ENCODE measurements at regions of chr2 and their contacts with region 1.

Region 1: DNA sequence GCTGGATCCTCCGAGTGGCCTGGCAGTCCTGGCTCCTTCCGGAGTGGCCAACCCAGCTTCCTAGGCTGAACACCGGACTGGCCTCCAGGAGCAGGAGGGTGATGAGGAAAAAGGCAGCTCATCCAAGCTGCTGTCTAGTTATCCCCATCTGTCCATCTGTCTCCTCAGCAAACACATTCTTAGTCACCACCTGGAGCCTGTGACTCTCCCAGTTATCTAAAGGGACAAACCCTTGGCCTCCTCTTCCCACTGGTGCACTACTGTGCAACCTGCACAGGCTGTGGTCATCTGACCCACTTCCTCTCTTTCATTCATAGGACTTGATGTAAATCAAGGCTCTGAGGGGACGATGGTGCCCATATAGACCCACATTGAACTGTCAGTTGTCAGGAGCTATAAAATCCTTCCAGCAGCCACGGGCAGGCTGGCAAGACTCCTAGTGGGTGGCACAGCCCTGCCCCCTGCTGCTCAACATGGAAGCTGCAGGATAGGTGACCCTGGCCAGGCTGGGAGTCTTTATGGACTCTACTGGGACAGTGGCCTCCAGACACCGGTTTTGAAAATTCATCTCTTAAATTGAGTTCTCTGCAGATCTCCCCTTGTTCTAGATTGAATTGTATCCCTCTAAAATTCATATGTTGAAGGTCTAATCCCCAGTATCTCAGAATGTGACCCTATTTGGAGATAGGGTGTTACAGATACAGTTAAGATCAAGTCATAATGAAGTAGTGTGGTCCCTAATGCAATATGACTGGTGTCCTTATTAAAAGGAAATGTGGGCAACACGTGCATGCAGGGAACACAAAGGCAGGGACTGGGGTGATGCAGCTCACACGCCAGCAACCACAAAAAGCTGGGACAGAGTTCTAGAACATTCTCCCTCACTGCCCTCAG is 29.3 kb upstream of the DUSP2 start:
- DNase-seq: peak; percentile 73
- H3K4me3 Mint-ChIP-seq: peak overlapping the region; percentile 59
- H3K27ac Mint-ChIP-seq: peak overlapping the region; percentile 69
- H3K4me1 Mint-ChIP-seq: peaks cover 15% of the 10 kb centered on the region
- H3K27me3 Mint-ChIP-seq: no peaks in the 10 kb centered on the region

Region 2: DNA sequence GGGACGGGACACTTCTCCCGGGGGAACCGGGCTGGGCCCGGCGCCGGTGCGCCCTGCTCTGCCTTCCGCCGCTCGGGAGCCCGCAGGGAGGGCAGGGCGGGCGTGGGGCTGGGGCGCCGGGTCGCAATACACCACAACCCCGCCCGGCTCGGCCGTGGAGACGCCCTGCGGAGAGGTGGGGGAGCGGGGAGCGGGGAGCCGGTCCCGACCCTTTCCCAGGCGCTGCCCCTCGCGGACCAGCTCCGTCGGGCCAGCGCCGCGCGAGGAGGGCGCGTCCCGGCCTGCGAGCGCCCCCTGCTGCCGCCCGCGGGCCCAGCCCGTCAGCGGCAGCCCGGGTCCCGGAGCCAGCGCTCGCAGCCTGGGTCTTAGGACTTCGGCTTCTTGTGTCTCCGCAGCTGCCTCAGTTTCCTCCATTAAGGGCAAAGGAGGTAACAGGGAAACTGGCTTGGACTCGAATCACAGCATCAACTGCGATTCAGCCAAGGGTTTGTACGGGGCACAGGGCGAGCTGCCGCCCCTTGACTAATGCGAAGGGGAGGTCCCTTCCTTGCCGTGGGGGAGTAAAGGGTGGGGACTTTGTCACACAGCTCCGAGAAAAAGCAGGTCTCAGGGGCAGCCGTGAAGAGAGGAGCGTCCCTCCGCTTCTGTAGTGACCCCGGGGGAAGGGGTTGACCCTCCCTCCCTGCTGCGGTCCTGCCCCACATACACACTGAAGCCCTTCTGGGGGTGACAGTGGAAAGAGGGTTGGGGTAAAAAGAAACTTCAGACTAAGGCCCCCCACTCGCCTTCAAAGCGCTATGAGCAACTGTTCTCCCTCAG is 57.4 kb before region 1 on chr2:
- intact Hi-C with region 1: loop called (anchors 1 kb)
- DNase-seq: peak; percentile 61
- H3K4me3 Mint-ChIP-seq: peak overlapping the region; percentile 75
- H3K27ac Mint-ChIP-seq: no peak overlapping the region
- H3K4me1 Mint-ChIP-seq: peaks cover 28% of the 10 kb centered on the region
- H3K27me3 Mint-ChIP-seq: peaks cover 37% of the 10 kb centered on the region

Region 3: GRCh38 chr2:96138179-96139145 is 36.0 kb before region 1 on chr2 and contains the start of gene ASTL:
- intact Hi-C with region 1: loop called (anchors 1 kb)
- DNase-seq: peak; percentile 53
- H3K4me3 Mint-ChIP-seq: no peak within 1 kb of the TSS
- H3K27ac Mint-ChIP-seq: no peak within 1 kb of the TSS
- H3K4me1 Mint-ChIP-seq: peaks cover 17% of the 10 kb centered on the region
- H3K27me3 Mint-ChIP-seq: peaks cover 2% of the 10 kb centered on the region
- total RNA-seq, gene ASTL: 2.0 and 2.9 TPM in 2 replicates

Region 4: GRCh38 chr2:96157651-96158553 is 16.6 kb before region 1 on chr2:
- intact Hi-C with region 1: loop called (anchors 1 kb)
- DNase-seq: peak; percentile 74
- H3K4me3 Mint-ChIP-seq: peak overlapping the region; percentile 65
- H3K27ac Mint-ChIP-seq: peak overlapping the region; percentile 87
- H3K4me1 Mint-ChIP-seq: peaks cover 74% of the 10 kb centered on the region
- H3K27me3 Mint-ChIP-seq: no peaks in the 10 kb centered on the region

Region 5: GRCh38 chr2:96389736-96390135 is 215.2 kb after region 1 on chr2:
- intact Hi-C with region 1: no loop called
- DNase-seq: no peak
- H3K4me3 Mint-ChIP-seq: no peak overlapping the region
- H3K27ac Mint-ChIP-seq: no peak overlapping the region
- H3K4me1 Mint-ChIP-seq: peaks cover 8% of the 10 kb centered on the region
- H3K27me3 Mint-ChIP-seq: no peaks in the 10 kb centered on the region

Measured in activated T-helper 1 cell treated with anti-CD3 and anti-CD28 coated beads, Interleukin-12 subunit alpha, Interleukin-12 subunit beta, Interleukin-2, Interleukin-4 antibody, amounts not matched to agents 30 ng/mL and 10 ng/mL and 1 ng/mL, durations not matched to agents 14 hours and 24 hours and 36 hours (primary cell).